ENCODE measurements at regions of chr18 and their contacts with region 1.

Region 1: DNA sequence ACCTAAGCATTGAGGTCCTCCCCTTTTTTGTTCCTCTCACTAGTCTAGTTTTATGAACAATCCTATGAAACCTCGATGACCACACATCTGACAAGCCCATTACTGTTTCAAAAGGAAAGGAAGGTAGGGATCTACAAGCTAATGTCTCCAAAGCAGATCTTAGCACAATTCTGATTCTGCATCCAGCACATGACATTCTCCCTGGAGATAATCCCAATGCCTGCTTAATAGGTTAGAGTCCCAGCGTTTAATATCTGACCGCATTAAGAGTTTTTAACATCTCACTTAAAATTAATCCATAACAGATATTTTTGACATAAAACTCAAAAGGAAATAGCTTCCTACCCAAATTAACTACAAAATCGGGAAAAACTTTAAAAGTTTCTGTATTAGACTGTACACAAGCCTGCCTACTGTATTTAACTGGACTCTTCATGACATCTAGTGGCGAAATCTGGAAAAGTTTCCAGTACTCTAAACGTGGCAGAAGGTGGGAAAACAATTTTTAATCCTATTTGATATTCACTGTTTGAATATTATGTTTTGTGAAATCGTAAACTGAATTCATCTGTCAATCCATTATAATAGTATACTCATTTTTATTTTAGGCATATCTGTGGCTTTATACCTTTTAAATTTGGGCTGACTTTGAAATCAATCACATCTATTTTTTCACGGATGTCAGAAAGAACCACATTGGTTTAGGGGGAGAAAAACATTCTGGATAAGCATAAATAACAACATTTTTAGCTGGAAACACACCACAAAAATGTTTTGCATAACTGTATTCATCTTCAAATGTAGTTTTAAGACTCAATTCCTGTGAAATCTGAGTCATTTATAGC is 62.4 kb downstream of the TXNL1 start:
- DNase-seq: no peak
- H3K4me3 ChIP-seq: no peak overlapping the region
- H3K27ac ChIP-seq: no peak overlapping the region
- H3K4me1 ChIP-seq: no peaks in the 10 kb centered on the region
- H3K27me3 ChIP-seq: no peaks in the 10 kb centered on the region
- CTCF ChIP-seq: peak; percentile 55

Region 2: DNA sequence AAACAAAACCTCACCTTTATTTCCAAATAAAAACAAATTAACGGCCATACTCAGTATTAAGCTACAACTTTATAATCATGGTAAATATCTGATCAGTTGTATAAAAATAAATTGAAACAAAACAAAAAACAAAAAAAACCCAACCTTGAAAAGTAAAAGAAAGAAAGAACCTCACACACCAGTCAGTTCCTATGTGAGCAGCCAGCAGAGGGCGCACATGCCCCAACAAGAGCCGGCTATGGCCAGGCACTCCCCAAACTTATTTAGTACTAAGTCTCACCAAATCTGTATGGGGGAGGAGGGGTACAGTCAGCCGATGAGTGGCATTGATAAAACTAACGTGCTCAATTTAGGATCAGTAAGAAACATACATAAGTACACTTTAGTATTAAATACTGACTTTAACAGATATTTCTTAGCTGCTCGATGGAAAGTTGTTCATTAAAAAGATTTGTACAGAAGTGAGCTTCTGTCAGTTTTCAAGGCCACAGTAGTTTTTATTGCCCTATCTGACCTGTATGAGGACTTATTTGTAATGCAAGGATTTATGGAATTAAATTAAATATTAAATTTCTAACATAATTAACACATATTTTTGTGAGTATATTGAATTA is 1160.7 kb before region 1 on chr18:
- intact Hi-C with region 1: loop called (anchors 2 kb)
- DNase-seq: peak; percentile 82
- H3K4me3 ChIP-seq: no peak overlapping the region
- H3K27ac ChIP-seq: no peak overlapping the region
- H3K4me1 ChIP-seq: no peaks in the 10 kb centered on the region
- H3K27me3 ChIP-seq: no peaks in the 10 kb centered on the region
- CTCF ChIP-seq: peak; percentile 87